ENCODE measurements at regions of chr10 and their contacts with region 1.

Region 1: DNA sequence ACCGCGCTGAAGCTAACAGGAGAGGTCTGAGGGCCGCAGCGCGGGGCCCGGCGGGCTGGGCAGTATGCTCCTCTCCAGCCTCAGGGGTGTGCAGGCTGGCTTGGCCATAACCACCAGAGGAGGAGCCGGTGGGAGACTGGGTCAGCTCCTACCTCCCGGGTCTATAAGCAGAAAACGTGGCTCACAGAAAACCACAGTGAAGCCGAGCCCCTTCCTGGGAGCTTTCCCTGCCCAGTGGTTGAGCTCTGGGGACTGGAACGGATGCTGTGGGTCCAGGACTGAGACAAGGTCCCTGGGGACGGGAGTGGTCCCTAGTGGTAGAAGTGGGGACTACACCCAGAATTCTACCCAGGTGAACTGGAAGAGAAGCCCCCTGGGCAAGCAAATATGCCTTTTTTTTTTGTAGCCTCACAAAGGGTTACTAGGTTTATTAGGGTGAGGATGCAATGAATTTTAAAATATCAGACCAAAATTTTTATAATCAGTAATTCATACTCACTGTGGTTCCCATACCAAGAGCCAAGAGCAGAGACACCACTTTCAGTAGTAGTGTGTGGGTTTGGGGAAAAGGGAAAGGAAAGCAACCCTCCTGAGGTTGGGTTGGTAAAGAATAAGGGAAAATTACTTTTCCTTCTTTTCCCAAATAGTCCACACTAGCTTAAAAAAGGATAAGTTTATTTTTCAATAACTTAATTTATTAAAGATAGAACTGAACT is 67.9 kb upstream of the PRKCQ start:
- DNase-seq: peak; percentile 85
- ATAC-seq: peak; percentile 91
- H3K4me3 Mint-ChIP-seq: peak overlapping the region; percentile 7
- H3K27ac Mint-ChIP-seq: no peak overlapping the region
- H3K4me1 Mint-ChIP-seq: peaks cover 50% of the 10 kb centered on the region
- H3K27me3 Mint-ChIP-seq: no peaks in the 10 kb centered on the region
- CTCF ChIP-seq: peak; percentile 98

Region 2: GRCh38 chr10:6504296-6504695 is 143.7 kb before region 1 on chr10:
- CTCF ChIA-PET with region 1: no interaction called
- POLR2A ChIA-PET with region 1: no interaction called
- intact Hi-C with region 1: no loop called
- DNase-seq: peak; percentile 72
- ATAC-seq: peak; percentile 63
- H3K4me3 Mint-ChIP-seq: peak overlapping the region; percentile 9
- H3K27ac Mint-ChIP-seq: peak overlapping the region; percentile 81
- H3K4me1 Mint-ChIP-seq: peaks cover 75% of the 10 kb centered on the region
- H3K27me3 Mint-ChIP-seq: no peaks in the 10 kb centered on the region
- CTCF ChIP-seq: no peak

Region 3: DNA sequence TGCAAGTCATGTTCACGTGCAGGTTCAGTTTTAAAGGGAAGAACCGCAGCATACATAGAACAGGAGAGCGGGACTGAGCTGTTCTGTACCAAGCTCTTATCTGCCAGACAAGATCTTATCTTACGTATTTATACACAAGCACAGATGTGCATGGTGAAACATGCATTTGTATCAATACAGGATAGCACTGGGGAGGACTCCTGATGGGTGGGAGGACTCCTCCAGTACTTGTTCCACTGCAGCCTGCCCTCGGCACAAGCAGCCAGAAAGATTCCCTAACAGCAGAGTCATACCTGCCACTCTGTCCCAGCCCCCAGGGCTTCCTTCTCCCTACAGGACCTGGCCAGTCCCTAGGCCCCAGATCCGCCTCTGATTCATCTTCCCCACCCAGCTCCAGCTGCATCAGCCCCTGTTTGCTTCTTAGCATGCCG is 54.7 kb before region 1 on chr10:
- CTCF ChIA-PET with region 1: interaction called, 10 read pairs
- POLR2A ChIA-PET with region 1: interaction called, 4 read pairs
- intact Hi-C with region 1: no loop called
- DNase-seq: no peak
- ATAC-seq: peak; percentile 50
- H3K4me3 Mint-ChIP-seq: peak overlapping the region; percentile 25
- H3K27ac Mint-ChIP-seq: peak overlapping the region; percentile 97
- H3K4me1 Mint-ChIP-seq: peaks cover 90% of the 10 kb centered on the region
- H3K27me3 Mint-ChIP-seq: no peaks in the 10 kb centered on the region
- CTCF ChIP-seq: no peak

Region 4: GRCh38 chr10:6603142-6604125 is 44.5 kb before region 1 on chr10:
- CTCF ChIA-PET with region 1: interaction called, 12 read pairs
- POLR2A ChIA-PET with region 1: interaction called, 4 read pairs
- intact Hi-C with region 1: no loop called
- DNase-seq: no peak
- ATAC-seq: no peak
- H3K4me3 Mint-ChIP-seq: no peak overlapping the region
- H3K27ac Mint-ChIP-seq: peak overlapping the region; percentile 43
- H3K4me1 Mint-ChIP-seq: peaks cover 74% of the 10 kb centered on the region
- H3K27me3 Mint-ChIP-seq: no peaks in the 10 kb centered on the region
- CTCF ChIP-seq: no peak

Region 5: GRCh38 chr10:6637053-6637452 is 10.9 kb before region 1 on chr10:
- CTCF ChIA-PET with region 1: interaction called, 26 read pairs
- POLR2A ChIA-PET with region 1: no interaction called
- intact Hi-C with region 1: no loop called
- DNase-seq: no peak
- ATAC-seq: no peak
- H3K4me3 Mint-ChIP-seq: no peak overlapping the region
- H3K27ac Mint-ChIP-seq: no peak overlapping the region
- H3K4me1 Mint-ChIP-seq: peaks cover 28% of the 10 kb centered on the region
- H3K27me3 Mint-ChIP-seq: no peaks in the 10 kb centered on the region
- CTCF ChIP-seq: no peak

Region 6: GRCh38 chr10:6659471-6659870 is 11.5 kb after region 1 on chr10:
- CTCF ChIA-PET with region 1: interaction called, 26 read pairs
- POLR2A ChIA-PET with region 1: interaction called, 3 read pairs
- intact Hi-C with region 1: no loop called
- DNase-seq: no peak
- ATAC-seq: no peak
- H3K4me3 Mint-ChIP-seq: no peak overlapping the region
- H3K27ac Mint-ChIP-seq: no peak overlapping the region
- H3K4me1 Mint-ChIP-seq: peaks cover 2% of the 10 kb centered on the region
- H3K27me3 Mint-ChIP-seq: no peaks in the 10 kb centered on the region
- CTCF ChIP-seq: no peak